Activated CD4-positive, alpha-beta memory T cell treated with anti-CD3 and anti-CD28 coated beads for 36 hours (primary cell): ENCODE measurements at regions of chr19 and their contacts with region 1.

Region 1: DNA sequence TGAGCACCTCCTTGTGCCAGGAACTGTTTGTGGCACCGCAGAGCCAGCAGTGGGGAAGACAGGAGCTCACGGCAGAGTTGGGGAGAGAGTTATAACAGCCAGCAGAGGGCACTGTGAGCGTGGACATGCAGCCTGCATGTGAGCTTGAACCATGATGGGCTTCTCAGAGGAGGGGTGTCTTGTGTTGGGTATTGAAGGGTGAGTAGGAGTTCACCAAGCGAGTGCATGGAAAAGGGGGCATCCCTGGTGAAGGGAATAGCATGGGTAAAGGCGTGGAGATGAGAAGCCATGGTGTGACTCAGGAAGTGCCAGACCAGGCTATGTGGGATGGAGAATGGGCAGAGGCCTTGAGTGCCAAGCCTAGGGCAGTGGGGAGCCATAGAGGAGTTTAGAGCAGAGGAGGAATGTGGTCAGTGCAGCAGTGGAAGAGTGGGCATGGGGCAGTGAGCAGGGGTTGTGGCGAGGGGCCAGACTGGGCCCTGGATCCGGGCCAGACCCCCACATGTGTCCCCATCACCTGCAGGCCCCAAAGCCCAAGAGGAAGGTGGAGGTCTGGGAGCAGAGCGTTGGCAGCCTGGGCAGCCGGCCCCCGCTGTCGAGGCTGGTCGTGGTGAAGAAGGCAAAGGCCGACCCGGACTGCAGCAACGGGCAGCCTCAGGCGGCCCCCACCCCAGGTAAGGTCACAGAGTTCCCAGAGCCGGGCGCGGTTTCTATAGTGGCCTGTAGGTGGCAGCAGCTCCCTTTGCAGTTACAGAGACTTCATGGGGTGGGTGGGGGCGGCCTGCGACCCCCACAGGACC is 11.8 kb upstream of the SHD start:
- DNase-seq: peak; percentile 68
- H3K4me3 Mint-ChIP-seq: no peak overlapping the region
- H3K27ac Mint-ChIP-seq: no peak overlapping the region
- H3K4me1 Mint-ChIP-seq: peaks cover 7% of the 10 kb centered on the region
- H3K27me3 Mint-ChIP-seq: no peaks in the 10 kb centered on the region

Region 2: DNA sequence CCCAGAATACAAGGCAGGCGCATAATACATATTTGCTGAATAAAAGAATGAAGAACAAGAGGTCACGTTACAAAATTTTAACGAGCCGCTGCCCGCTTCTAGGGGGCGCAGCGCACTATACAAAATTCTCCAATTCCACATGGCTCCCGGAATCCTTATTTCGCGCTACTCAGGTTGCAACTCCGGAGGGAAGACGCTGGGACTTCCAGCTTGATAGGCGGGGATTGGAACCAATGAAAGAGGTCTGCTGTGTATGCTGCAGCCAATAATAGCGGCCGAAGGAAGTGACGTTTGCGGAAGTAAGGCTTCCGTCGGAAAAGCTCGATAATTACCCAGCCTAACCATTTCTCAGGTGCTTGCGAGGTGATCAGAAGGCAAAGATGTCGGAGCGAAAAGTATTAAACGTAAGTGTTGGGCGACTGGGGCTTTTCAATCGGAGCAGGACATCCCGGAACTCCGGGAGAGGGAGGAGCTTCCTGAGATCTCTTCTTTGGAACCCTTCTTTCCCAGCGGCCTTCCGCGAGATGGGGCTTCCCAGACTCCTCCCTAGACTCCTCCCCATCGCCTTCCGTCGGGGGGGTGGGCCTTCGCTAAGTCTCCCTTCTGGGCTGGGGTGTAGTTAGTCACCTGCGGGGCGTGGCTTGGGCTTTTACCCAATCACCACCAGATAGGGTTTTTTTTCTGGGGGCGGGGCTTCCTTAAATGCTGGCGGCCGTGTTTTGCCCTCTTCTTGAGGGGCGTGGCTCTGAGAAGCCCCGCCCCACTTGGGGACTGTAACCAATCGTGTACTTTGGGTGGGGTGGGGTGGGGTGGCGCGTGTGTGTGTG is 20.3 kb before region 1 on chr19 and contains the start of gene YJU2:
- CTCF ChIA-PET with region 1: interaction called, 19 read pairs
- POLR2A ChIA-PET with region 1: no interaction called
- intact Hi-C with region 1: no loop called
- DNase-seq: peak; percentile 99
- H3K4me3 Mint-ChIP-seq: peak within 1 kb of the TSS; percentile 83
- H3K27ac Mint-ChIP-seq: peak within 1 kb of the TSS; percentile 96
- H3K4me1 Mint-ChIP-seq: peaks cover 19% of the 10 kb centered on the region
- H3K27me3 Mint-ChIP-seq: no peaks in the 10 kb centered on the region
- total RNA-seq, gene YJU2: 24.0 to 25.5 TPM

Region 3: GRCh38 chr19:4322942-4323665 is 55.8 kb after region 1 on chr19:
- CTCF ChIA-PET with region 1: interaction called, 24 read pairs
- POLR2A ChIA-PET with region 1: no interaction called
- intact Hi-C with region 1: no loop called
- DNase-seq: no peak
- H3K4me3 Mint-ChIP-seq: no peak overlapping the region
- H3K27ac Mint-ChIP-seq: no peak overlapping the region
- H3K4me1 Mint-ChIP-seq: peaks cover 17% of the 10 kb centered on the region
- H3K27me3 Mint-ChIP-seq: peaks cover 3% of the 10 kb centered on the region

Region 4: DNA sequence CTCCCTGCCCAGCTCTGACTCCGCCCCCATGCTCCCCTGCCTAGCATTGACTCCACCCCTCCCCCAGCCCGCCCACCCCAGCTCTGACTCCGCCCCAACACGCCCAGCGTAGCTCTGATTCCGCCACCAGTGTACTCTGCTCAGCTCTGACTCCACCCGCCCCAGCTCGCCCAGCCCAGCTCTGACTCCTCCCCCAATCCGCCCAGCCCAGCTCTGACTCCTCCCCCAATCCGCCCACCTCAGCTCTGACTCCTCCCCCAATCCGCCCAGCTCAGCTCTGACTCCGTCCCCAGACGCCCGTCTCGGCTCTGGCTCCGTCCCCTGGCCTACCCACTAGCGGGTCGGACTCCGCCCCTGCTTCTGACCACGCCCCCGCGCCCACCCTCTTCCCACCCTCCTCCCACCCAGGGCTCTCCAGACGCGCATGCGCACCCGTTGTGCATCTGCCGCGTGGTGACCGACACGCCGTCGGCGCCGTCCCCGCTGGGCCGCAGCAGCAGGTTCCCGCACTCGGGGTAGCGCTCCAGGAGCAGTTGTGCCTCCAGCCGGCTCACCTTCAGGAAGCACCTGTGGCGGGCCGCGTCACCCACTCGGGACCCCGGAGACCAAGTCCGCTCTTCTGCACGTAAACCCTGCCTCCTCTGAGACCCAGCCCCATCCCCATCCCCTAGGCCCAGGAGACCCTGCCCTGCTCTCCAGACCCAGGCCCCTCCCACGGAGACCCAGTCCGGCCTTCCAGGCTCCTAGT is 61.1 kb after region 1 on chr19:
- CTCF ChIA-PET with region 1: interaction called, 10 read pairs
- POLR2A ChIA-PET with region 1: no interaction called
- intact Hi-C with region 1: no loop called
- DNase-seq: peak; percentile 98
- H3K4me3 Mint-ChIP-seq: peak overlapping the region; percentile 85
- H3K27ac Mint-ChIP-seq: peak overlapping the region; percentile 81
- H3K4me1 Mint-ChIP-seq: peaks cover 26% of the 10 kb centered on the region
- H3K27me3 Mint-ChIP-seq: peaks cover 3% of the 10 kb centered on the region

Region 5: DNA sequence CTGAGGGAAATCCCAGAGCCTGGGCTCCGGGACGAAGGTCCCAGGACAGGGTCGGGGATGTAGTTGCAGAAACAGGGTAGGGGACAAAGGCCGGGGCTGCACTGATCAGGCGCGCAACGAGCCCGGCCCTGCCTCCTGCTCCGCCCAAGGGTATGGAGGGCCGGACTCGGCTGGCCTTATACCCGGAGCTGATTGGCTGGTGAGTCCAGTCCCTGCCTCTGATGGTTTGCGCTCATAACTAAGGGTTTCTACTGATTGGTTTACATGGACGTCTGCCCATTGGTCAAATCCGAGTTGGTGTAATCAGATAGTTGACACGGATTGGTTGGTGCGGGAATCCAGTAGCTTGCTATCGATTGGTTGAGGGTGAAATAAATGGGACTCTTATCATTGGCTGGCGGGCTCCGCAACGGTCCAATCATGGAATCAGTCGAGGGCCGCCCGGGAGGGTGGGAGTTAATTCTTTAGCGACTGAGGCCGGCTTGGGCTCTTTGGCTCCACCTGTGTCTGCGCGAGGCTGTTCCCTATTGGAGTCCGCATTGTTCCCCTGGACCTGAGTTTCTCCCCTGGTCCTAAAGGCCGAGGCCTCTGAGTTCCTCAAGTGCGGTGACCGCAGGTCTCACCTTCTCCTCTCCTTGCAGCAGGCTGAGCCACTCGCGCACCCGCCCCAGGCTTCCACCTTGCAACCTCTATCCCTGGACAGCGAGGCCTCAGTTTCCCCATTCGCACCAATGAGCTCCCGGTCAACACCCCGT is 75.5 kb after region 1 on chr19:
- CTCF ChIA-PET with region 1: interaction called, 26 read pairs
- POLR2A ChIA-PET with region 1: no interaction called
- intact Hi-C with region 1: no loop called
- DNase-seq: peak; percentile 96
- H3K4me3 Mint-ChIP-seq: peak overlapping the region; percentile 89
- H3K27ac Mint-ChIP-seq: peak overlapping the region; percentile 88
- H3K4me1 Mint-ChIP-seq: peaks cover 24% of the 10 kb centered on the region
- H3K27me3 Mint-ChIP-seq: no peaks in the 10 kb centered on the region

Region 6: GRCh38 chr19:4352701-4353121 is 85.4 kb after region 1 on chr19:
- CTCF ChIA-PET with region 1: interaction called, 93 read pairs
- POLR2A ChIA-PET with region 1: no interaction called
- intact Hi-C with region 1: loop called (anchors 1 kb)
- DNase-seq: peak; percentile 61
- H3K4me3 Mint-ChIP-seq: no peak overlapping the region
- H3K27ac Mint-ChIP-seq: no peak overlapping the region
- H3K4me1 Mint-ChIP-seq: no peaks in the 10 kb centered on the region
- H3K27me3 Mint-ChIP-seq: no peaks in the 10 kb centered on the region

Region 7: GRCh38 chr19:4524808-4525562 is 257.7 kb after region 1 on chr19:
- CTCF ChIA-PET with region 1: interaction called, 20 read pairs
- POLR2A ChIA-PET with region 1: no interaction called
- intact Hi-C with region 1: loop called (anchors 10 kb)
- DNase-seq: peak; percentile 80
- H3K4me3 Mint-ChIP-seq: no peak overlapping the region
- H3K27ac Mint-ChIP-seq: no peak overlapping the region
- H3K4me1 Mint-ChIP-seq: no peaks in the 10 kb centered on the region
- H3K27me3 Mint-ChIP-seq: peaks cover 7% of the 10 kb centered on the region